ENCODE measurements at regions of chr2 and their contacts with region 1.

Region 1: DNA sequence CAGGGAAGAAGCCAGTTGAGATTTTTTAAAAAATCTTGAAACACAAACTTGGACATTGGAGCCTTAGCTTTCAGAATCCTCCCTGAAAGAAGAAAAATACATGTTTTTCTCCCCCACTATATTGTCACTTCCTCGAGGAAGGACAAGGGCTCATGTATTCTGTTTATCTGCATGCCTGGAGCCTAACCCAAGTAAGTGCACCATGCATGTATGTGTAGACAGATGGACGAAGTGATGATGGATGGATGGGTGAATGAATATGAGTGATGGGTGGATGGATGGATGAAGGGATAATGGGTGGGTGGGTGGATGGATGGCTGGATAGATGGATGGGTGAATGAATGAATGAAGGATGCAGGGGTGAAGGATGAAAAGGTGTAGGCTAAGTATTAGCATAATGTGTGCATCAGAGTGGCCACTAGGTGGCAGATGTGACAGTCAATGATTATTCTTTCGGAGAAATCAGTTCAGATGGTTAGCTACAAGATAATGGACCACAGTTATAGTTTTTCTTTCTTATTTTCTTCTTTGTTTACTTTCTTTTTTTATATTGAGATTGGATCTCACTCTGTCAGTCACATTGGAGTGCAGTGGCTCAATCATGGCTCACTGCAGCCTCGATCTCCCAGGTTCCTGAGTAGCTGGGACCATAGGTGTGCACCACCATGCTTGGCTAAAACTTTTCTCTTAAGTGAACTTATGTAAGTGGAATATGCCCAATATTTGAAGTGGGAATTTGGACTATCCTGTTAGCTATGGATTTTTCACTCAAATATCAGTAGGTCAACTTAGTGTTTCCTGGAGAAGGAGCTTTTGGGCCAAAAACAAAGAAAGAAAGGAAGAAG is 18.5 kb upstream of the CCDC93 start:
- DNase-seq: peak; percentile 57
- CTCF ChIP-seq: peak; percentile 84

Region 2: GRCh38 chr2:118013724-118014491 is 18.5 kb before region 1 on chr2 and contains the start of gene CCDC93:
- CTCF ChIA-PET with region 1: interaction called, 25 read pairs
- POLR2A ChIA-PET with region 1: no interaction called
- DNase-seq: peak; percentile 98
- CTCF ChIP-seq: no peak

Region 3: DNA sequence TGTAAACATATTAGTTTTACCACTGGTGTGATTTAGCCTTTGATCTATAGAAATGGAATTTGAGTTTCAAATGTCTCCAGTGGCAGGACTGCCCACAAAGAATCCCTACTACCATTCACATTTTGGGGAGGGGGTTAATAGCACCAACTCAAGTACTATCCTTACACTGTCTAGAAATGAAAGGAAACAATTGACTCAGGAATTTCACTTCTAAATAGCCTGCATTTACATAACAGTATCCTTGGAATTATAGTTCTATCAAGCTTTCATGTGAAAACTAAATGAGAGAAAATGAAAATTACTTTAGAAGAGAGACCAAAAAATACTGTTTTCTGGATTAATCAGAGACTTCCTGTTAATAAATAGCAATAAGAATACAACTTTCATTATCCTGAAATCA is 11.0 kb before region 1 on chr2:
- CTCF ChIA-PET with region 1: interaction called, 25 read pairs
- POLR2A ChIA-PET with region 1: no interaction called
- DNase-seq: no peak
- CTCF ChIP-seq: no peak

Region 4: GRCh38 chr2:118061135-118061955 is 29.0 kb after region 1 on chr2:
- CTCF ChIA-PET with region 1: interaction called, 486 read pairs
- POLR2A ChIA-PET with region 1: no interaction called
- DNase-seq: peak; percentile 38
- CTCF ChIP-seq: peak; percentile 52

Region 5: GRCh38 chr2:118340103-118340502 is 307.7 kb after region 1 on chr2:
- CTCF ChIA-PET with region 1: no interaction called
- POLR2A ChIA-PET with region 1: no interaction called
- DNase-seq: no peak
- CTCF ChIP-seq: no peak